Motor neuron (in vitro differentiated cells): ENCODE measurements at regions of chr6 and their contacts with region 1.

Region 1: GRCh38 chr6:163180874-163181541 is 233.5 kb upstream of the QKI start:
- ATAC-seq: peak; percentile 88 to 95 (median 94)
- H3K4me3 ChIP-seq: no peak overlapping the region
- H3K27ac ChIP-seq: peak overlapping the region; percentile 1 to 55
- H3K4me1 ChIP-seq: peaks cover 18 to 34% of the 10 kb centered on the region in 2 donors

Region 2: DNA sequence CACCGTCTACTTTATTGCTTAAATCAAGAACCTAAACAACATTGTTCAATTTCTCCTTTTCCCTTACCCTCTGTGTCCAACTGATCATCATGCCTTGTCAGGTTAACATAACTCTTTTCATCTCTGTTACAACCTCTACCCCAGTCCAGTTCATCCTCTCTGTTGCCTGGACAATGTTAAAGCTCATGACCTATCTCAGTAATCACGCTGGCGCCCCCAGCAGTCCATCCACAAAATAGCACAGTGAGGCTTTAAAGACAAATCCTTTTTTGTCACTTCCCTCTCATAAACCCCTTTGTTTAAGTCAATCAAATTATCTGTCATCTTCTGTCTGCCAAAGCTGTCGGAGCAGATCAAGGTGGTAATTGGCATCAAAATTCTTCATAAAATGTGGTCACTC is 373.7 kb after region 1 on chr6:
- in situ Hi-C with region 1: loop called in 1 of 9 experiments (anchors 25 kb)
- ATAC-seq: peak in 3 of 8 experiments; percentile 10 to 57 (median 52)
- H3K4me3 ChIP-seq: no peak overlapping the region
- H3K27ac ChIP-seq: no peak overlapping the region
- H3K4me1 ChIP-seq: no peaks in the 10 kb centered on the region